Caco-2 (cell line): ENCODE measurements at regions of chr17 and their contacts with region 1.

Region 1: DNA sequence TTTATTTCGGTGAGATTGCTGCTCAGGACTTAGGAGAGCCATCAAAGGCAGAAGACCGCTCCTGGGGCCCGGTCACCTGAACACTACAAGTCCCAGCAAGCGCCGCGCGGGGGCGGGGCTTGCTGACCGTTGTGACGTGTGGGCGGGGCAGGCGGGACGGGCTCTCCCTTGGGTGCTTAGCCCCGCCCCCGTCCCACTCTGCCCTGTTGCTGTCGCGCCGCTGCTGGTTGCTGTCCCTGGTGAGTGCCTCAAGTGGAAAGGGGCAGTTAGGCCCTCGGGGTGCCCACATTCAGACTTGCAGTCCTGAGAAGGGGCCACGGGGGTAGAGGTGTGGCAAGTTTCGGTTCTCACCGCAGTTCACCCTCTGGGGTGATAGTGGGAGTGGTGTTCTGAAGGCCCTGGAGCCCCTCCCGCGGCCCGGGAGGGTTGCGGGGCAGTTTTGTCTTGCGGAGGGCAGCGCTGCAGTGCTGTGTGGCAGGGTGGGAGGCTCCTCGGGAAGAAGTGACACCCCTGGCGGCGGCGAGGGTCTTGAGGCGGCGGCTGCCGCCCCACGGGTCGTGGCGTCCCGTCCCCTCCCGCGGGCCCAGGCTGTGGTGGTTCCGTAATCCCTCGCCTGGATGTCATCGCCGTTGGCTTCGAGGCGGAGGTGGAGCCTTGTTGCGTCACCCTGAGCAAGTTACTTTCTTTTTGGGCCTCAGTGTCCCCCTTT is at the start of gene CALCOCO2:
- DNase-seq: peak; percentile 99 to 100
- H3K4me3 ChIP-seq: peak within 1 kb of the TSS; percentile 89
- H3K4me3 Mint-ChIP-seq: peak within 1 kb of the TSS; percentile 99
- H3K27ac Mint-ChIP-seq: peak within 1 kb of the TSS; percentile 99
- H3K4me1 ChIP-seq: peaks cover 10% of the 10 kb centered on the region
- H3K4me1 Mint-ChIP-seq: no peaks in the 10 kb centered on the region
- H3K27me3 ChIP-seq: no peaks in the 10 kb centered on the region
- H3K27me3 Mint-ChIP-seq: no peaks in the 10 kb centered on the region
- CTCF ChIP-seq: peak in 1 of 2 experiments; percentile 24
- total RNA-seq, gene CALCOCO2: 233 and 251 TPM in 2 replicates

Region 2: DNA sequence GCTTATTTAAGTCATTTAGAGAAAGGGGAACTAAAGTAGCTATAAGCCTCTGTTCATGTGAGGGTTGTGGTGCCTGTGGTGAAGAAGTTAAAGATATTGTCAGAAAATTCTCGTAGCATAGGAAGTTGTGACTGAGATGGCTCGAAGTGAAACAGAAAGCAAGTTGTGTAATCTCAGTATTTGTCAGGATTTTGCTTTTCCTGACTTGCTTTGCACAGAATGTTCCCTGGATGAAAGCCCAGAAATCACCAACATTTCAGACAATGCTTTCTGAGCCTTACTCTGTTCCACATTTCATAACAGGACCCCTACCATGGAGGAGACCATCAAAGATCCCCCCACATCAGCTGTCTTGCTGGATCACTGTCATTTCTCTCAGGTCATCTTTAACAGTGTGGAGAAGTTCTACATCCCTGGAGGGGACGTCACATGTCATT is 10.4 kb after region 1 on chr17:
- CTCF ChIA-PET with region 1: no interaction called
- POLR2A ChIA-PET with region 1: interaction called, 3 read pairs
- intact Hi-C with region 1: loop called (anchors 1 kb)
- DNase-seq: no peak
- H3K4me3 ChIP-seq: no peak overlapping the region
- H3K4me3 Mint-ChIP-seq: no peak overlapping the region
- H3K27ac Mint-ChIP-seq: no peak overlapping the region
- H3K4me1 ChIP-seq: peaks cover 20% of the 10 kb centered on the region
- H3K4me1 Mint-ChIP-seq: peaks cover 30% of the 10 kb centered on the region
- H3K27me3 ChIP-seq: no peaks in the 10 kb centered on the region
- H3K27me3 Mint-ChIP-seq: no peaks in the 10 kb centered on the region
- CTCF ChIP-seq: no peak